K562 (cell line): ENCODE measurements at regions of chr3 and their contacts with region 1.

Region 1: GRCh38 chr3:107271787-107272387 is 105.4 kb upstream of the CCDC54 start:
- DNase-seq: peak in 3 of 4 experiments; percentile 9 to 15 (median 14)
- ATAC-seq: peak; percentile 56; the same call in 2 of the 3 replicates
- H3K4me3 ChIP-seq: no peak overlapping the region
- H3K27ac ChIP-seq: no peak overlapping the region
- H3K4me1 ChIP-seq: no peaks in the 10 kb centered on the region
- H3K27me3 ChIP-seq: no peaks in the 10 kb centered on the region
- CTCF ChIP-seq: peak in 2 of 3 experiments; percentile 37 to 60; a peak in 4 of 6 replicates
- EP300 ChIP-seq: no peak
- POLR2A ChIP-seq: no peak
- RAD21 ChIP-seq: peak; percentile 57 to 73

Region 2: GRCh38 chr3:106215047-106215446 is 1056.8 kb before region 1 on chr3:
- CTCF ChIA-PET with region 1: no interaction called
- POLR2A ChIA-PET with region 1: no interaction called
- in situ Hi-C with region 1: no loop called
- intact Hi-C with region 1: no loop called
- DNase-seq: peak in 2 of 4 experiments; percentile 33 to 63
- ATAC-seq: peak; percentile 91
- H3K4me3 ChIP-seq: no peak overlapping the region
- H3K27ac ChIP-seq: peak overlapping the region; percentile 35; the same call in 2 of the 3 replicates
- H3K4me1 ChIP-seq: peaks cover 0 to 4% of the 10 kb centered on the region in 2 experiments; a peak in 2 of 5 replicates
- H3K27me3 ChIP-seq: no peaks in the 10 kb centered on the region
- CTCF ChIP-seq: no peak
- EP300 ChIP-seq: no peak; the same call in 1 of the 2 replicates
- POLR2A ChIP-seq: no peak
- RAD21 ChIP-seq: no peak

Region 3: DNA sequence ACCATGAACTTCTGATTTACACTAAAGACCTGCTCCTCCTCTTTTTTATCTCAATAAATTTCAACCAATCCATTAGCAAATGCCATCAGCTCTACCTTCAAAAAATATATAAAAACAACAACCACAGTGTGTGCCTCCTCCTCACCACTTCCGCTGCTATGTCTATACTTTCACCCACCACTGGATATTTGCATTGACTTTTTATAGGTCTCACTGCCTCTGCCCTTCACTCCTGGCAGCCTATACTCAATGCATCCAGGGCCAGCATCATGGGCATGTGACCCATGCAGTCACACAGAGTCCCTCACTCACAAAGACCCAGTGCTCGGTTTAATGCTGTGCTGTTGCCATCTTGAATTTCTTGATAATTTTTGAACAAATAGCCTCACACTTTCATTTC is 51.8 kb after region 1 on chr3:
- CTCF ChIA-PET with region 1: no interaction called
- POLR2A ChIA-PET with region 1: no interaction called
- in situ Hi-C with region 1: no loop called
- intact Hi-C with region 1: no loop called
- DNase-seq: no peak
- ATAC-seq: no peak
- H3K4me3 ChIP-seq: no peak overlapping the region
- H3K27ac ChIP-seq: no peak overlapping the region
- H3K4me1 ChIP-seq: no peaks in the 10 kb centered on the region
- H3K27me3 ChIP-seq: no peaks in the 10 kb centered on the region; a peak in 2 of 5 replicates
- CTCF ChIP-seq: no peak
- EP300 ChIP-seq: no peak
- POLR2A ChIP-seq: no peak
- RAD21 ChIP-seq: no peak

Region 4: GRCh38 chr3:107384907-107385306 is 113.0 kb after region 1 on chr3:
- CTCF ChIA-PET with region 1: no interaction called
- POLR2A ChIA-PET with region 1: no interaction called
- in situ Hi-C with region 1: no loop called
- intact Hi-C with region 1: no loop called
- DNase-seq: no peak
- ATAC-seq: no peak
- H3K4me3 ChIP-seq: no peak overlapping the region
- H3K27ac ChIP-seq: no peak overlapping the region
- H3K4me1 ChIP-seq: no peaks in the 10 kb centered on the region
- H3K27me3 ChIP-seq: no peaks in the 10 kb centered on the region
- CTCF ChIP-seq: no peak
- EP300 ChIP-seq: no peak
- POLR2A ChIP-seq: no peak
- RAD21 ChIP-seq: no peak

Region 5: DNA sequence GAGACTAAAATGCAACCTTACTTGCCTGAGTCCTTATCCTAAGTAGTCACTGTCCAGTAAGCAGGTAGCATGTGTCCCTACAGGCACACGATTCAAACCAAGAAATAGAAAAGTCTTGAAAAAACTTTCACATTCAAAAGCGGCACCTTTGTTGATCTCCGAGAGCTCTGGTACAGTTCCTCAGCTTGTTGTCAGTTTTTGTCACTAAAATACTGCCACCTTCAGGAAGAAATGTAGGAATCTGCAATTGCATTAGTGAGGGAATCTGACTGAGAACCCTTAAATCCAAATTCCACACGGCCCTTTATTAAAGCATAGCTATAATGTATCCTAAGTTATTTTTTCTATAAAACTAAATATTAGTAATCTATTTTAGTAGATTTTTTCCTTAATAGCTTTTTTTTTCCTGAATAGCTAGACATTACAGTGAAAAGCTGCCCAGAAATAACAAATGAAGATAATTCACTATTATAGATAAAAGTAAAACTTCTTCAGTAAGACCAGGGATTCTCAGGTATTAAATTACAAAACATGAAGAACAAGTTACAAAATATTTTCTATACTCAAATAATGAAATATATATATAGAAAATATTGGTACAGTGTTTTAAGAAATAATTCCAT is 149.4 kb after region 1 on chr3:
- CTCF ChIA-PET with region 1: no interaction called
- POLR2A ChIA-PET with region 1: no interaction called
- in situ Hi-C with region 1: no loop called
- intact Hi-C with region 1: loop called (anchors 2 kb)
- DNase-seq: peak in 3 of 4 experiments; percentile 6 to 46 (median 17)
- ATAC-seq: peak; percentile 79
- H3K4me3 ChIP-seq: no peak overlapping the region
- H3K27ac ChIP-seq: no peak overlapping the region
- H3K4me1 ChIP-seq: no peaks in the 10 kb centered on the region
- H3K27me3 ChIP-seq: no peaks in the 10 kb centered on the region
- CTCF ChIP-seq: peak; percentile 36 to 68 (median 48); a peak in 5 of 6 replicates
- EP300 ChIP-seq: no peak
- POLR2A ChIP-seq: no peak
- RAD21 ChIP-seq: peak; percentile 54 to 65

Region 6: DNA sequence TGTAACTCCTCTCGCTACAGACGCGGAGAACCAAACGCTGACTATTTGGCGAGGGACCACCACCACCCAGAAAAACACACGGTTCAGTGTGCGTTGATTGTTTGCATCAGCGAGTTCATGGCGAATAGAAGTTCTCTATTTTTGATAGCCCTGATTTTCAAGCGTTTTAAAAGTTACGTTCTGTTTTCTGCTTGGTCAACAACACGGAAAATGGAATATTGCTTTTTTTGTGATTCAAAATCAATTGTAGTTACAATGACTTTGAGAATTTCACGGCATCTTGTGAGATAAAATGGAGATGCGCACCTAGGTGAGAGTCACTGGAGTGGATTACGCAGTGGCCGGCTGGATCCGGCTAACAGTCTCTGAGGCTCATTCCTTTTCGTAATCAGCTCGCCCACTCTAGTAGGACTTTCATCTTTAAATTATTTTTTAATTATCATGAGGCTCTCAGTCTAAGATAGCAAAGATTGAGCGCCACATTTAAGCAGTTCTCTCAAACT is 160.2 kb after region 1 on chr3:
- CTCF ChIA-PET with region 1: no interaction called
- POLR2A ChIA-PET with region 1: no interaction called
- in situ Hi-C with region 1: no loop called
- intact Hi-C with region 1: no loop called
- DNase-seq: no peak
- ATAC-seq: no peak
- H3K4me3 ChIP-seq: peak overlapping the region; percentile 37
- H3K27ac ChIP-seq: no peak overlapping the region
- H3K4me1 ChIP-seq: peaks cover 0 to 16% of the 10 kb centered on the region in 2 experiments; a peak in 2 of 5 replicates
- H3K27me3 ChIP-seq: no peaks in the 10 kb centered on the region
- CTCF ChIP-seq: no peak
- EP300 ChIP-seq: no peak
- POLR2A ChIP-seq: no peak
- RAD21 ChIP-seq: no peak

Region 7: DNA sequence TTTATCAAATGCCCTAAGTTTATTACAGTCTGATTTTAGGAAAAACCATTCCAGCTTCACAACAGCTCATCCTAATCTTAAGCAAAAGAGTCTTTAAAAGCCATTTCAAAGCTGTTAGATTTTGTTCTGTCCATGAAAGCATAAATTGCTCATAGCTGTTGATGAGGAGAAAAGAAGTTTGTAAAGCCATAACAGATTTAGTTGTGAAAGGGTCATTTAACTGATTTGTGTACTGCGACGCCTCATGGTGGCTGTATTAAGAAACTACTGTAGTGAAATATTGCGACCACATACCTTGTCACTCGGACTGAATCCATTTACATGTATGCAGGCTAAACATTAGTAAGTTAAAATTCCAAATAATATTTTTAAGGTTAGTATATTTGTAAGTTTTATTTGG is 271.8 kb after region 1 on chr3:
- CTCF ChIA-PET with region 1: interaction called, 7 read pairs
- POLR2A ChIA-PET with region 1: no interaction called
- in situ Hi-C with region 1: no loop called
- intact Hi-C with region 1: loop called (anchors 5 kb)
- DNase-seq: peak in 1 of 4 experiments; percentile 14
- ATAC-seq: peak; percentile 62; the same call in 2 of the 3 replicates
- H3K4me3 ChIP-seq: no peak overlapping the region
- H3K27ac ChIP-seq: no peak overlapping the region
- H3K4me1 ChIP-seq: no peaks in the 10 kb centered on the region
- H3K27me3 ChIP-seq: no peaks in the 10 kb centered on the region
- CTCF ChIP-seq: peak in 2 of 3 experiments; percentile 21 to 52; a peak in 3 of 6 replicates
- EP300 ChIP-seq: no peak
- POLR2A ChIP-seq: no peak
- RAD21 ChIP-seq: peak; percentile 34 to 44; a peak in 3 of 4 replicates